ENCODE measurements at regions of chr20 and their contacts with region 1.

Region 1: DNA sequence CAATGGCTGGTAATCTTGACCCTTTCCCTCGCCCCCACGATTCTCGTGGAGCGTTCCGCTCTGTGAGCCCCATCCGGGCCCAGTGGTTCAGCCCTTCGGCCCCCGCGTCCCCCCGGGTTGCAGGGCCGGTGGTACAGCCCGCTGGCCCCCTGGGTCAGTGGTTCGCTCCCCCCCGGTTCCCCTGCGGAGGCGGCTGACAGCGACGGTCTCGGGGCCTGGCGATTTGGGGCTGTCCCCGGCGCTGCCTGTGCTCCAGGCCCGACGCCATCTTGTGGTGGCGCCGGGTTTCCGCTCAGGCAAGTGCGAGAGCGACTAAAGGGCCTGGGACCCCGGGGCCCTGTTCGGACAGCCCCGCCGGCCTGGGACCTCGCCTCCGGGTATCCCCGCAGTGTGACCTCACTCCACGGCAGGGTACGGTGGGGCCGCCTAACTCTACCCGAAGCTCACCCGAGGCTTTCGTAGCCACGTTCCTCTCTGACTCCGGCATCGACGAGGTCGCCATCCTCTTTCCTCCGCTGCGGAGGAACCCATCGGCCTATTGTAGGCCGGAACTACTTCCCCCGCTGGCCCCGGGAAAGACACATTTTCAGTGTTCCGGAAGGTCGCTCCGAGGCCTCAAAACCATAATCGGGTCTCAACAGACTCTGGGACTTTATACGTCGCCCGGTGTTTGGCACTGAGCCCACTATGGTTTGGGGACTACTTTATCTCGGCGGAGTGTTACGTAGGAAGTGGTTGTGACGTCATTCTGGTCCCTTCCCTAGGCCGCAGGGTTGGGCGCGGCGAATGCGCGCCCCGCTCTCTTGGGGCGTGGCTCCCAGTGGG is at the start of gene ZNF335:
- DNase-seq: peak; percentile 96
- ATAC-seq: peak; percentile 88
- H3K4me3 Mint-ChIP-seq: peak within 1 kb of the TSS; percentile 94
- H3K27ac Mint-ChIP-seq: peak within 1 kb of the TSS; percentile 98
- H3K4me1 Mint-ChIP-seq: peaks cover 15% of the 10 kb centered on the region
- H3K27me3 Mint-ChIP-seq: no peaks in the 10 kb centered on the region
- total RNA-seq, gene ZNF335: 27.4 to 28.9 TPM

Region 2: GRCh38 chr20:44966030-44966961 is 1005.6 kb before region 1 on chr20 and contains the start of gene STK4:
- CTCF ChIA-PET with region 1: no interaction called
- POLR2A ChIA-PET with region 1: no interaction called
- intact Hi-C with region 1: loop called in 1 of 2 experiments (anchors 10 kb)
- DNase-seq: peak; percentile 97
- ATAC-seq: peak; percentile 71
- H3K4me3 Mint-ChIP-seq: peak within 1 kb of the TSS; percentile 94
- H3K27ac Mint-ChIP-seq: peak within 1 kb of the TSS; percentile 98
- H3K4me1 Mint-ChIP-seq: peaks cover 55% of the 10 kb centered on the region
- H3K27me3 Mint-ChIP-seq: no peaks in the 10 kb centered on the region
- total RNA-seq, gene STK4: 156 to 164 TPM

Region 3: DNA sequence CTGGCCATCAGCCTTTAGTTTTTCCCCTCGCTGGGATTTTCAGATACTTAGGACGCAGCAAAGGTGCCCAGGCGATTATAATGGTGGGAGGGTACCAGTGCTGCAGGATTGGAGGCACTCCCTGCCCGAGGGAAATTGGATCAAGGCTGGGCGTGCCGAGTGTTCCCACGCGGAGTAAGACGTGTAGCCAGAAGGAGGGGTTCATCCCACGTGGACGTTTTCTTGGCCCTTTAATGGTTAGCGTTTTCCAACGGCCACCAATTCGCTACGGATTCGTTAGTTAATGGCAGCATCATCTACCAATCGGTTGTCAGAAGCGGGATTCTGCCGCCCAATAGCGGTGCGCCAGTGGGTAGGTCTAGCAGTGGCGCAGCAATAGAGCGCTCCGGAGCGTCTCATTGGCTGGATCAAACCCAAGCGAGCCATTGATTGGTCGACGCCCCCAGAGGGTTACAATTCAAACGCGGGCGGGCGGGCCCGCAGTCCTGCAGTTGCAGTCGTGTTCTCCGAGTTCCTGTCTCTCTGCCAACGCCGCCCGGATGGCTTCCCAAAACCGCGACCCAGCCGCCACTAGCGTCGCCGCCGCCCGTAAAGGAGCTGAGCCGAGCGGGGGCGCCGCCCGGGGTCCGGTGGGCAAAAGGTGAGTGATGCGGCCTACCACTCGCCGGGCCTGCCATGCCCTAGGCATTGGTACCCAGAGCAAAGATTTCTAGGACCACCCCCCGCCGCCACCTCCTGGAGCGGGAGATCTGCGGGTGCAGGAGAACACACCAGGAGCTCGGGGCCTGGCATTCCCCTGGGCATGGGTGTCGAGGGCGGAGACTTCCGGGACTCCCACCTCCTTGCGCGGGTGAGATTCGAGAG is 159.5 kb before region 1 on chr20 and contains the start of gene UBE2C:
- CTCF ChIA-PET with region 1: interaction called, 5 read pairs
- POLR2A ChIA-PET with region 1: no interaction called
- intact Hi-C with region 1: loop called in 1 of 2 experiments (anchors 1 kb)
- DNase-seq: peak; percentile 97
- ATAC-seq: peak; percentile 100
- H3K4me3 Mint-ChIP-seq: peak within 1 kb of the TSS; percentile 99
- H3K27ac Mint-ChIP-seq: peak within 1 kb of the TSS; percentile 88
- H3K4me1 Mint-ChIP-seq: peaks cover 21% of the 10 kb centered on the region
- H3K27me3 Mint-ChIP-seq: no peaks in the 10 kb centered on the region
- total RNA-seq, gene UBE2C: 175 to 230 TPM

Region 4: DNA sequence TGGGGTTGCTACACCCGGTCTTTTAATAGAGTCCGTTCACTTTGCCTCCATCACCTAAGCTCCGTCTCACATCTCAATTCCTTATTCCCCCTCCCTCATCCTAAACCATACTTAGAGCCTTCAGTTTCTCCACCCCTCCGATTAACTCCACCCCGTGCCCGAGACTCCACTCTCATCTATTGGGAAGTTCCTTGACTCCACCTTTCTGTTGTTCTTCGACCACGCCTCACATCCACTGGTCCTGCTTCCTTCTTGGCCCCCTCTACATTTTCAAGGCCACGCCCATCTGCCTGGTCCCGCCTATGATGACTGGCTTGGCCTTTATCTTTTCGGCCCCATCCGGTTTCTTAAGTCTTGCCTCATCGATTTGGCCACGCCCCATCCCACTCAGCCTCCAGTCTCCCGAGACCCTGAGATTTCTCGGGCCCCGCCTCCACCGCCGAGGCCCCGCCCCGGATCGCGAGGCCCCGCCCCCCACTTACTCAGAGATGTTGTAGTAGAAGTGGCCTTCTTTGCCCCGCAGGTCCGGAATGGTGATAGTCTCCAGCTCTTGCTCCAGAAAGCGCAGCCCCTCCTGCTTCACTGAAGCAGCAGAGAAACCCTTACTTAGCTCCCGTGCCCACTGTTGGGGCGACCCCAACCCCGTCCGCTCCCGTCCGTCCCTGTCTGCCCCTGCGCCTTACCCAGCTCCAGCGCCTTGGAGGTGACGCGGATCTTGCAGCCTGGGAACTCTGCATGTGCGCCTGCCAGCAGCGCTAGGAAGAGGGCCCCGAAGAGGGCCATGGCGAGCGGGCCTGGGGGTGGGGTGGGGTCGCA is 61.0 kb before region 1 on chr20:
- CTCF ChIA-PET with region 1: interaction called, 3 read pairs
- POLR2A ChIA-PET with region 1: no interaction called
- intact Hi-C with region 1: loop called in 1 of 2 experiments (anchors 1 kb)
- DNase-seq: peak; percentile 98
- ATAC-seq: peak; percentile 92
- H3K4me3 Mint-ChIP-seq: peak overlapping the region; percentile 68
- H3K27ac Mint-ChIP-seq: peak overlapping the region; percentile 80
- H3K4me1 Mint-ChIP-seq: peaks cover 16% of the 10 kb centered on the region
- H3K27me3 Mint-ChIP-seq: peaks cover 12% of the 10 kb centered on the region

Region 5: DNA sequence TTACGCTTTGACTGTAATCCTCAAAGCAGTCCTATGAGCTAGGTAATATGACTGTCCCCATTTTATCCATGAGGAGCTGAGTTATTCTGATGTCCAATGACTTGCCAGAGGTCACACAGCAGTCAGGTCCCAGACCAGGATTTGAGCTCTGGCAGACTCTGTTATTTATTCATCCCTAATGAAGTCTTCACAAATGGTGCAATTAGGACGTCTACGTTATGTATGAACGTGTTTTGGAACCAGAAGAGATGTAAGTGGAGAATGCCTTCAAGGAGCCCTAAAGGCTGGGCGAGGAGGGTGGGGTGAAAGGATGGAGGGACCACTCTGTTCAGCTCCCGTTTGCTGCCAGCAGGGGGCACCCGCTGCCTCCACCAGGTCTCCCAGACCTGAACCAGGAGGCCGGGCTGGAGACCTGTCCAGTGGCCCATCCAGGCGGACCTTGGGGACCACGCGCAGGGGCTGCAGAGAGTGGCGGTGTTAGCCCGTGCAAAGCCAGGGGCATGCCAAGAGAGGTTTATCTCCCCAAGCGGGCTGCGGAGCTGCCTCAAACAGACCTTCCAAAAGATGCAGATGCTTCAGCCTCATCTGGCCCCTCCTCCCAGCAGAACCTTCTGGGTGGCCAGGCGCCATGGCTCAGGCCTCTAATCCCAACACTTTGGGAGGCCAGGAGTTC is 15.4 kb after region 1 on chr20:
- CTCF ChIA-PET with region 1: interaction called, 25 read pairs
- POLR2A ChIA-PET with region 1: interaction called, 3 read pairs
- intact Hi-C with region 1: no loop called
- DNase-seq: peak; percentile 90
- ATAC-seq: peak; percentile 96
- H3K4me3 Mint-ChIP-seq: no peak overlapping the region
- H3K27ac Mint-ChIP-seq: no peak overlapping the region
- H3K4me1 Mint-ChIP-seq: no peaks in the 10 kb centered on the region
- H3K27me3 Mint-ChIP-seq: no peaks in the 10 kb centered on the region

Region 6: GRCh38 chr20:46363800-46364634 is 392.1 kb after region 1 on chr20:
- CTCF ChIA-PET with region 1: no interaction called
- POLR2A ChIA-PET with region 1: no interaction called
- intact Hi-C with region 1: loop called in 1 of 2 experiments (anchors 1 kb)
- DNase-seq: peak; percentile 92
- ATAC-seq: peak; percentile 85
- H3K4me3 Mint-ChIP-seq: peak overlapping the region; percentile 84
- H3K27ac Mint-ChIP-seq: peak overlapping the region; percentile 86
- H3K4me1 Mint-ChIP-seq: peaks cover 82% of the 10 kb centered on the region
- H3K27me3 Mint-ChIP-seq: no peaks in the 10 kb centered on the region